ENCODE measurements at regions of chrX and their contacts with region 1.

Region 1: DNA sequence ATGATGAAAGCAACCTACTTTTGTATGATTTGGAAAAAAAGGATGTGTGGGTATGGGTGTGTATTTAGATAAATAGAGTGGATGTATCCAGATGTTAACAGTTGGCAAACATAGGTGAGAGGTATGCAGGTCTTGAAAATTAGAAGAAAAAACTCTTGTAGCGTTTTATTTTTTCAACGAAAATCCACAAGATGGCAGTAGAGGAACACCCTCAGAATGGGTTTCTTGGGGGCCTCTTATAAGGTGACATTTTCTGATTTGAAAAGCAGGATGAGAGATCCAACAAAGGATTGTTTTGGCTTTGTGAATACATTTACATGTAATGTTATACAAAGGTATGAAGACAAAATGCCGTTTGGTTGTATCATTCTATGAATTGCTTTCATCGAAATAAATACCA is 68.3 kb downstream of the FMR1NB start:
- DNase-seq: no peak
- ATAC-seq: no peak
- H3K4me3 ChIP-seq: no peak overlapping the region
- H3K27ac ChIP-seq: no peak overlapping the region
- H3K4me1 ChIP-seq: no peaks in the 10 kb centered on the region
- H3K27me3 ChIP-seq: no peaks in the 10 kb centered on the region
- CTCF ChIP-seq: peak in 5 of 7 experiments; percentile 17 to 51 (median 41)
- POLR2A ChIP-seq: no peak

Region 2: DNA sequence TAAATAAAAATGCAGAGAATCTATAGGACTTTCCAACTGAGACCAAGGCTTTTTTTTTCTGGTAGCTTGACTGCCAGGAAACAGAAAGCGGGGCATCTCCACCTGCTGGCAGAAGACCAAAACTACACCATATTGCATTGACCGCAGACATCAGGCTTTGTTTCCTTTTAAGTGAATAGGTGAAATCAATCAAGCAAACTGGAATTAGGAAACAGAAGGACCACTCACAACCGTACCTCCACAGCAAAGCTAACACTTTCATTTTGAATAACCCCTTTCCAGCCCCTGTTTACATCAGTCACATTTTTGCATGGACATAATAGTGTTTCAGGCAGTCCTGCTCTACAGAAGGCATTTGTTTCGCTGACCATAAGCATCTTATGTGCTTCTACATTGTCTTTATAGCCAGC is 1237.5 kb after region 1 on chrX:
- intact Hi-C with region 1: loop called (anchors 10 kb)
- DNase-seq: peak; percentile 23 to 59 (median 37)
- ATAC-seq: no peak
- H3K4me3 ChIP-seq: no peak overlapping the region
- H3K27ac ChIP-seq: no peak overlapping the region
- H3K4me1 ChIP-seq: no peaks in the 10 kb centered on the region
- H3K27me3 ChIP-seq: no peaks in the 10 kb centered on the region
- CTCF ChIP-seq: peak; percentile 26 to 60 (median 43)
- POLR2A ChIP-seq: no peak

Region 3: GRCh38 chrX:149462849-149463248 is 1413.4 kb after region 1 on chrX:
- intact Hi-C with region 1: loop called (anchors 10 kb)
- DNase-seq: no peak
- ATAC-seq: no peak
- H3K4me3 ChIP-seq: no peak overlapping the region
- H3K27ac ChIP-seq: no peak overlapping the region
- H3K4me1 ChIP-seq: no peaks in the 10 kb centered on the region
- H3K27me3 ChIP-seq: no peaks in the 10 kb centered on the region
- CTCF ChIP-seq: no peak
- POLR2A ChIP-seq: no peak

Measured in body of pancreas (tissue), 4 donors.